ENCODE measurements at regions of chr2 and their contacts with region 1.

Region 1: GRCh38 chr2:113889471-113890252 is at the start of gene ACTR3:
- DNase-seq: peak; percentile 99
- H3K4me3 Mint-ChIP-seq: peak within 1 kb of the TSS; percentile 95
- H3K27ac Mint-ChIP-seq: peak within 1 kb of the TSS; percentile 98
- H3K4me1 Mint-ChIP-seq: peaks cover 64% of the 10 kb centered on the region
- H3K27me3 Mint-ChIP-seq: no peaks in the 10 kb centered on the region
- total RNA-seq, gene ACTR3: 516 to 536 TPM

Region 2: DNA sequence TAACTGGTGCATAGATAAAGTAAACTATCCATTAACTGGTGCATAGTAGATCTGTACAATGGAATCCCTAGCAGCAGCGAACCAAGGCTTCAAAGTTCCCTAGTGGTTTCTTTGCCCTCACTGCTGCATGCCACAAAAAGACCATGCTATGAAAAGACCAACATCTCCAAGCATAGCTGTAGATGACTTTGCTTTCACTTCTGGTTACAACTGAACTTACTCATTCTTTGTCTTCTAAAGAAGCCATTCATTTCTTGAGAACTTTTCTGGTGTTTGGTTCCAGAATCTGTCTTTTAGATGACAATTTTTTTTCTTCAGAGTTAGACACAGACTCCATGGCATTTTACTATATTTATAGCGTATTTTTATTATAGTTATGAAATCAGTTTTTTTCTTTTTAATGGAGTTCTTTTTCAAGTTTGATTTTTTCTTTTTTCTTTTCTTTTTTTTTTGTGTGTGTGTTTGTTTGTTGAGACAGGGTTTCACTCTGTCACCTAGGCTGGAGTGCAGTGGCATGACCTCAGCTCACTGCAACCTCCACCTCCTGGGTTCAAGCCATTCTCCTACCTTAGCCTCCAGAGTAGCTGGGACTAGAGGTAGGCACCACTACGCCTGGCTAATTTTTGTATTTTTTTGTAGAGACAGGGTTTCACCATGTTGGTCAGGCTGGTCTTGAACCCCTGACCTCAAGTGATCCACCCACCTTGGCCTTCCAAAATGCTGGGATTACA is 196.8 kb before region 1 on chr2:
- CTCF ChIA-PET with region 1: no interaction called
- intact Hi-C with region 1: loop called (anchors 1 kb)
- DNase-seq: peak; percentile 57
- H3K4me3 Mint-ChIP-seq: peak overlapping the region; percentile 6
- H3K27ac Mint-ChIP-seq: peak overlapping the region; percentile 77
- H3K4me1 Mint-ChIP-seq: peaks cover 34% of the 10 kb centered on the region
- H3K27me3 Mint-ChIP-seq: no peaks in the 10 kb centered on the region

Region 3: DNA sequence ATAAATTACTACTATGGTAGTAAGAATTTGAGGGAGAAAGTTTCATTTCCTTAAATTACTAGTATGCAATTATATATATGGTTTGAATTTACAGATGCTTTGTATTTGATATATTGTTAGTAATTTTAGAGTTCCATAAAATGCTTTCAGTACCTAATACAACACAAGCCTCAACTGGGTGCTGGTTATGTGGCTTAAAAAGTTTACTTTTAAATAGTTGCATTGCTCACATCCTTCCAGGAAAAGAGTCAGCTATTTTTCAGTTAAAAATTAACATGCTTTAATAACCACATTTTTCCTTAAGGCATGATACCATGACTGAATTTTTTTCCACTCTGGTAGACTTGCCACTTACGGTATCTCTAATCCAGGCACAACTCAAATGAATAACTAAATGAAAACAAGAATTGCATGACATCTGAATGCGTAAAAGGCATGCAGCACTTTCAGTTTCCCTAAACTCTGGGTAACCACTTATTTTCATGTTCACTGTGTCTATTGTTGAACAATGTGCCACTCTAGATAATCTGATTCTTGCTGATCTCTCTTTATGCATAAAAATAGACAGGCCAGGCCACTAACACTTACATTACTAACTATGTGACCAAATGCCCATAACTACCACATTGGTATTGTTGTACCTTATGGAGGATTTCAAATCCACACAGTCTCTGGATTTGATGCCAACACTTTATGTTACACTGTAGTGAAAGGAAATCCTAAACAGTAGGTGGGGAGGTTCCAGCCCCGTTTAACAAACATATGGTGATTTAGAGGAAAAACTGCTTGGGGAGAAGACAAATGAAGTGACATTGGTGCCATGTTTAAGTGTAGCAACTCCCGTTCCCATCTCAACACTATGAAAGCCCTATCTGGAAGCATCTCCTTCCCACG is 97.7 kb before region 1 on chr2:
- CTCF ChIA-PET with region 1: interaction called, 3 read pairs
- intact Hi-C with region 1: loop called (anchors 1 kb)
- DNase-seq: peak; percentile 59
- H3K4me3 Mint-ChIP-seq: peak overlapping the region; percentile 26
- H3K27ac Mint-ChIP-seq: peak overlapping the region; percentile 94
- H3K4me1 Mint-ChIP-seq: peaks cover 36% of the 10 kb centered on the region
- H3K27me3 Mint-ChIP-seq: no peaks in the 10 kb centered on the region

Region 4: DNA sequence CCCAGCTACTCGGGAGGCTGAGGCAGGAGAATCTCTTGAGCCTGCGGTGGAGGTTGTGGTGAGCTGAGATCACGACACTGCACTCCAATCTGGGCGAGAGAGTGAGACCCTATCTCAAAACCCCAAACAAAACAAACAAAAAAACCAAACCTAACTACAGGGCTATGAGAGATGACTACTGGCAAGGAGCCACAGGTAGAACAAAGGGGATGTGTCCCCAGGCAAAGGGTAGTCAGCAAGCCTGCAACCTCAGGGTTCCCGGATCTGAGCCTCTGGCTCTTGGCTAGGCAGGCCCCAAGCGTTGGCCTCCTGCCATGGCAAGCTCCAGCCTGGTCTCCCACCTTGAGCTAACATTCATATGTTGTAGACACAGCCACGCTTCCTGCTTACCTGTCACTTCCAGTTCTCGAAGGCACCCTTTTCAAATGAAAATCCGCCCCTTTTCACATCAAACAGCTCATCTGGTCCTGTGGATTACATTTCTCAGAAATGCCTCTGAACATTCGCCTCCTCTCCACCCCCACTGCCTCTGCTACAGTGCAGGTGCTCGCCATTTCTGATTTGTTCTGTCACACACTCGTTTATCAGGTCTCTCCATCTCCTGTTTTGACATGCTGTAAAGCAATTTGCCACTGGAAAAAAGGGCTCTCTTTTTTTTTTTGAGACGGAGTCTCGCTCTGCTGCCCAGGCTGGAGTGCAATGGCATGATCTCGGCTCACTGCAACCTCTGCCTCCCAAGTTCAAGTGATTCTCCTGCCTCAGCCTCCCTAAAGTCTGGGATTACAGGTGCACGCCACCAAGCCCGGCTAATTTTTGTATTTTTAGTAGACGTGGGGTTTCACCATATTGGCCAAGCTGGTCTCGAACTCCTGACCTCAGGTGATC is 12.9 kb before region 1 on chr2:
- CTCF ChIA-PET with region 1: interaction called, 7 read pairs
- intact Hi-C with region 1: loop called (anchors 1 kb)
- DNase-seq: peak; percentile 95
- H3K4me3 Mint-ChIP-seq: peak overlapping the region; percentile 50
- H3K27ac Mint-ChIP-seq: peak overlapping the region; percentile 85
- H3K4me1 Mint-ChIP-seq: peaks cover 52% of the 10 kb centered on the region
- H3K27me3 Mint-ChIP-seq: no peaks in the 10 kb centered on the region

Region 5: DNA sequence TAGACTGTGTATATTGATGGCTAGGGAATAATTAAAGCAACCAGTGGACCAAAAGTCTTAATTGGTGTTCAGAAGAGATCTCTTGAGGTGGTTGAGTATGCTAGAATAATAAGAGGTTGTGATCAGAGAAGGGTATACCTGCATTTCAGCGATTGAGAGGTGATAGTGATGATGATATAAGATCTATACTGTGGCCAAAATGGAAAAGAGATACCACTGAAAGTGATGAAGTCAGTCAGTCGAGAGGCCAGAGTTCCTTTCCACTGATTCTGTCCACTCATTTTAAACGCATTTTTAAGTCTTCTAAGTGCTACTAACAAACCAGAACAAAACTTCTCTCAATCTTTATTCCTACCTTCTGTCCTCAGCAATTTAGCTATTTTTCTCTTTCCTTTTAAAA is 33.1 kb after region 1 on chr2:
- CTCF ChIA-PET with region 1: interaction called, 5 read pairs
- intact Hi-C with region 1: loop called (anchors 2 kb)
- DNase-seq: no peak
- H3K4me3 Mint-ChIP-seq: no peak overlapping the region
- H3K27ac Mint-ChIP-seq: no peak overlapping the region
- H3K4me1 Mint-ChIP-seq: peaks cover 25% of the 10 kb centered on the region
- H3K27me3 Mint-ChIP-seq: no peaks in the 10 kb centered on the region